ENCODE measurements at regions of chr6 and their contacts with region 1.

Region 1: DNA sequence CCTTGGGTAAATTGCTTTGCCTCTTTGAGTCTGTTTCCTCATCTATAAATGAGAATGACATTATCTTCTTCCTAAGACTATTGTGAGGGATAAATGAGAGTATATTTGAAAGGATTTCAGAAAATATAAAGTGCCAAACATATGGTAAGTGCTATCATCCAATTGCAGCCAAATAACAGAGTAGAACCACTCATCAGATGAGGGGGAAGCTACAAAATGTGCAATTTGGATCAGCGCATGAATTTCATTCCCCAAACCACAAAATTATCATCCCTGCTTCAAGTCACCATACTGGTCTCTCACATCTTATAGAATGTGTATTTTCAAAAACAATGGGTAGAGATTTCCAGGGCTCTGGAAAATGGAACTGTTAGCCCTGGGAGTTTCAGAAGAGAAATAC is 158.5 kb downstream of the ARHGAP18 start:
- DNase-seq: no peak
- H3K4me3 ChIP-seq: no peak overlapping the region
- H3K27ac ChIP-seq: no peak overlapping the region
- H3K4me1 ChIP-seq: no peaks in the 10 kb centered on the region
- H3K27me3 ChIP-seq: no peaks in the 10 kb centered on the region
- CTCF ChIP-seq: no peak

Region 2: GRCh38 chr6:128932061-128932460 is 619.4 kb before region 1 on chr6:
- intact Hi-C with region 1: no loop called
- DNase-seq: no peak
- H3K4me3 ChIP-seq: no peak overlapping the region
- H3K27ac ChIP-seq: no peak overlapping the region
- H3K4me1 ChIP-seq: no peaks in the 10 kb centered on the region
- H3K27me3 ChIP-seq: no peaks in the 10 kb centered on the region
- CTCF ChIP-seq: no peak

Region 3: GRCh38 chr6:129565366-129565765 is 13.9 kb after region 1 on chr6:
- intact Hi-C with region 1: loop called (anchors 2 kb)
- DNase-seq: no peak
- H3K4me3 ChIP-seq: no peak overlapping the region
- H3K27ac ChIP-seq: no peak overlapping the region
- H3K4me1 ChIP-seq: no peaks in the 10 kb centered on the region
- H3K27me3 ChIP-seq: no peaks in the 10 kb centered on the region
- CTCF ChIP-seq: no peak

Region 4: DNA sequence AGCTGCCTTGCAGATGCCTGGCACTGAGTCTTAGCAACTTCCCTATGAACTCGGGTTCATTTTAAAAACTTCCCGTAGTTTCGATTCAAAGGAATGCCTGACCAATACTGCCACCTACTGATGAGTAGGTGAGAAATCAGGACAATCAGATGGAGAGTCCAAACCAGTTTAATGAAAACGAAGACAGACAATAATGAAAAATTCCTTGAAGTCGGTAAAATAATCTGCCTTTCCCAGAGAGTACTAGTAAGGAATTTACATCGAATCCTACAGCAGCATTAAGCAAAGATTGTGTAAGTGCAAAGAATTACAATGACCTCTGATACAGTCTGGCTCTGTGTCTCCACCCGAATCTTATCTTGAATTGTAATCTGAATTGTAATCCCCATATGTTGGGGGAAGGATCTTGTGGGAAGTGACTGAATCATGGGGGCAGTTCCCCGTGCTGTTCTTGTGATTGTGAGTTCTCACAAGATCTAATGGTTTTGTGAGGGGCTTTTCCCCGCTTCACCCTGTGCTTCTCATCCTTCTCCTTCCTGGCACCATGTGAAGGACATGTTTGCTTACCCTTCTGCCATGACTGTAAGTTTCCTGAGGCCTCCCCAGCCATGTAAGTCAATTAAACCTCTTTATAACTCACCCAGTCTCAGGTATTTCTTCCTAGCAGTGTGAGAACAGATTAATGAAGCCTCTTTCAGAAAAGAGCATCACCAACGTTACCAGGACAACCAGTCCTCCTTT is 24.1 kb after region 1 on chr6:
- intact Hi-C with region 1: no loop called
- DNase-seq: no peak
- H3K4me3 ChIP-seq: peak overlapping the region; percentile 34 to 35
- H3K27ac ChIP-seq: no peak overlapping the region
- H3K4me1 ChIP-seq: peaks cover 0 to 3% (median 0%) of the 10 kb centered on the region in 4 donors
- H3K27me3 ChIP-seq: no peaks in the 10 kb centered on the region
- CTCF ChIP-seq: peak; percentile 54 to 60

Measured in tibial artery (tissue), 4 donors.